Sciatic nerve (tissue), 2 donors: ENCODE measurements at regions of chr21 and their contacts with region 1.

Region 1: DNA sequence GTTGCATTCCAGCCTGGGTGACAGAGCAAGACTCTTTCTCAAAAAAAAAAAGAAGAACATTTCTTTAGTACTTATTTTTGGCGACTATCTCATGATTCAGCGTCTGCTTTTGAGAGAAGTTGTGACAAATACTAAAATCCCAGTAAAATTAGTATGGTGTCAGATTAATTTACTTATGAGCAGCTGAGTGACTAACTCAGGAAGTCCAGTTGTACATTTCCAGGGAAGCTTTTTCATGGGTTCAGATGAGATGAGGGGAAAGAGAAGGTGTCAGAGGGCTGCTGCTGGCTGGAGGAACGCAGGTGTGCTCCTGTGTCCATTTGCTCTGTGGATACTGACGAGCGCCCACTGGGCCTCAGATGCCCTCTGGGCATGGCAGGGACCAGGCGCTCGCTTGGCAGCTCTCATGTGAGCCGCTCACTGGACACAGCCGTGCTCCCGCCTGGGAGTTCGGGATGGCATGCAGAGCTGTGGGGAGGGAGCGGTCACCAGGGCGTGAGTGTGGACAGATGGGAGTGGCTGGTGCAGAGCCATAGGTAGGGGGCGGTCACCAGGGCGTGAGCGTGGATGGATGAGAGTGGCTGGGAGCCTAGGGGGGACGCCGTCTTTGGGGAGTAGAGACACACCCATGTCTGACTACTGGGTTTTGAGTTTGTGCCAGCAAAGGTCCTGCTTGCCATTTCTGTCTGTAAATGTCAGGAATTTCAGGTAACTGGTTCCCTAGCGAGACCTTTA is 55.0 kb downstream of the ADARB1 start:
- DNase-seq: peak; percentile 60
- ATAC-seq: peak; percentile 40

Region 2: DNA sequence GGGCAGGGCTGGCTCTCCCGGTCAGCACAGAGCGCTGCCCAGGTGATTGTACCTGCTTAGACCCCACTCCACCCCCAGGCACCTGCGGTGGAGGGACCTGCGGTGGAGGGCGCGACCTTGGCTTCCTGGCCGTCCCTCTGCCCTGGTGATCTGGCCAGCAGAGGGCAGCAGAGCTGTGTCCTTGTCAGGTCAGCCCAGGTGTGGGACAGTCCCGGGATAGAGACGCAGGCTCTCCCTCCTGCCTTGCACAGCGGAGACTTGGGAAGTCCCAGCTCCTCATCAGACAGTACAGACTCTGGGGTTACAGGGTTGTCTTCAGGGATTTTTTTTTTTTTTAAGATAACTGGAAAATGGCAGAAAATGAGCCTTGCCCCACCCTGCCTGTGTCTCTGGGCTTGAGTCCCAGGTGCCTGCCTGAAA is 179.6 kb before region 1 on chr21:
- intact Hi-C with region 1: loop called (anchors 5 kb)
- DNase-seq: peak; percentile 96
- ATAC-seq: peak; percentile 90

Region 3: DNA sequence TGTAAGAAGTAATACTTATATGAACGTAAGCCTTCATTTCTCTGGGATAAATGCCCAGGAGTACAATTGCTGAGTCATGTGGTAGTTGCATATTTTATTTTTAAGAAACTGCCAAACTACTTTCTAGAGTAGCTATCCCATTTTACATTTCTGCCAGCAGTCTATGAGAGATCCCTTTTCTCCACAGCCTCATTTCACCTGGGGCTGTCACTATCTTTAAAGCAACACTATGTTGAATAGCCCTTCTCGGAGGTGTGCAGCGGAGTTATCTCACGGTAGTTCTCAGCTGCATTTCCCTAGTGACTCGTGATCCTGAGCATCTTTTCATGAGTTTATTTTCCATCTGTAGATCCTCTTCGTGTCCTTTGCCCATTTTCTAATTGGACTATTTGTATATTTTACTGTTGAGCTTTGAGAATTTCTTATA is 38.5 kb after region 1 on chr21:
- intact Hi-C with region 1: no loop called
- DNase-seq: no peak
- ATAC-seq: peak; percentile 55

Region 4: DNA sequence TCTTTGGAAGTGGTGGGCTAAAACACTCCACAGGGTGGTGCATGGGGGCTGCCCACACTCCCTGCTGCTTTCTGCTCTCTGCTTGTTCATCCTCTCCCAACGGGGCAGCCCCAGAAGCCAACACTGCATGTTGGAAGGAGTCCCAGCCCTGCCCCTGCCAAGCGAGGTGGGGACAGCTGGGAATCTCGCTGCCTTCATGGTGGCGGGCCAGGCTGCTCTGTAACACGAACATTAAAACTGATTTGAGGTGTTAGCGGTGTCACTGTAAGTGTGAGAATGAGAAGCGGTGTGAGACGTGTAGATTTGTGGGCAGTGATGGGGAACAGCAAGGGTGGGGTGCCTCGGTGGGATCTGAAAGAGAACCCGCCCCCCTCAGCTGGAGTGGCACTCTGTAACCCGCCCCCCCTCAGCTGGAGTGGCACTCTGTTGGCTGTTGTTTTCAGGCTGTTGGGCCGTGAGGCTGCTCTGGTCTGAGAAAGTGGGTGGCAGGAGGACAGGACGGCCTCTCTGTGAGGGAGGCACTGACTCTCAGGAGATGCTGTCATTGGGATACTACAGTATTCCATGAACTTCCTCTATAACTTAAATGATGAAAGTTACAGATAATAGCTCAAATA is 595.1 kb after region 1 on chr21:
- intact Hi-C with region 1: no loop called
- DNase-seq: no peak
- ATAC-seq: no peak